Heart right ventricle (tissue), 16 donors: ENCODE measurements at regions of chr1 and their contacts with region 1.

Region 1: DNA sequence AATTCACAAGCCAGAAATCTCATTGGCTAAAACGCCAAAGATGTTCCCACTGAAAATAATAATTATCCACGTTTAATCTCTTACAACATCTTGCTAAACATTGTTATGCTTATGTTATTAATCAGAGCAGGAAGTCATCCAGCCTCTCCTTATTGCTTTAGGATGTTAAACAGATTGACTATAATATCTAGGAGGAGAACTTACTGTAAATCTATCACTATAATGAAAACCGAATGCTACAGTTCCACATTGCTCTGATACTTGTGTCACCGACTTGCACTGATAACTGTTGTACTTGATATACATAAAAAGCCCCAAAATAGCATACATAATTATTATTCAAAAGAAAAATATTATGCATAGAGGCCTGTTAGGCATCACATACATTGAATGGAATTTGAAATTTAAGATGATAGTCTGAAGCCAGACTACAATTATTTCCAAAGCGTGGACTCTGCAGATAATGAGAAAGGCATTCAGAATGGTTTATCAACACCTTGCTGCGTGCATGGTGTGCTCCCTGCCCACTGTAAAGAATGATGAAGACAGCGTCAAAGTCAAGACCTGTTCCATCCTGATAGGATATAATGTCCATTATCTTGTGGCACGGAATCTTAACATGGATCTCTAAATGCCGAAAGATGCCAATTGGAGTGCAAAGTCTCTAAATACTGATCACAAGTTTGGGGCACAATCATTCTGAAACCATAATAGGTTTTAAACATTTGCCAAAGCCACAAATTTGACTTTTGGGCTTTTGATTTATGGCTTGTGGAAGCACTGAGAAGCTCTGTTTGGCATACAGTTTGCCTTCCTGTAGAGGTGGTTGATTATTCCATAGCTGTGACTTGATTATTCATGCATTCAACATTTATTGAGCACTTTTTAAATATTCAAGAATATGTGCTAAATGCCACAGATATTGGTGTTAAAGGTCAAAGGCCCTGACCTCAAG is 71.3 kb downstream of the CRB1 start:
- DNase-seq: no peak
- ATAC-seq: no peak
- H3K4me3 ChIP-seq: no peak overlapping the region
- H3K27ac ChIP-seq: no peak overlapping the region
- H3K4me1 ChIP-seq: no peaks in the 10 kb centered on the region
- H3K27me3 ChIP-seq: no peaks in the 10 kb centered on the region
- CTCF ChIP-seq: no peak

Region 2: DNA sequence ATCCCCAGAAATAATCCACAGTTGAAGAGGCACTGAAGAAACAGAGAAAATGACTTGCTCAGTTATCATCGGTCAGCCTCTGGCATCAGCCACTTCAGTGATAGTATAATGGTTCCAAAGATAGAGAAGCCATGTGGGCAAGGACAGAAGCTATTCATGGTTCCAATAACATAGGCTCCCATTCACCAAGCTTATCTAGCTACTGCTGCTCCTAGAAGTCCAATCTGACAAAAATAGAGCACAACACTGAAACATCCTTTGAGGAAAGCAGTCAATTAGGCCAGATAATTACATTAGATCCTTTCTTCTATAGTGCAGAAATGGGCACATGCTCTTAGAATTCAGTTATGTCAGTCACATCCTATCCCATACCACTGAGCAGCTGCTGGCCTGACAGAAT is 104.8 kb before region 1 on chr1:
- intact Hi-C with region 1: loop called in 1 of 10 experiments (anchors 10 kb)
- DNase-seq: no peak
- ATAC-seq: peak in 3 of 8 donors; percentile 27 to 62 (median 47)
- H3K4me3 ChIP-seq: no peak overlapping the region
- H3K27ac ChIP-seq: no peak overlapping the region
- H3K4me1 ChIP-seq: peaks cover 0 to 3% (median 0%) of the 10 kb centered on the region in 9 donors
- H3K27me3 ChIP-seq: no peaks in the 10 kb centered on the region
- CTCF ChIP-seq: no peak

Region 3: GRCh38 chr1:197399755-197400527 is 60.6 kb after region 1 on chr1:
- intact Hi-C with region 1: no loop called
- DNase-seq: no peak
- ATAC-seq: no peak
- H3K4me3 ChIP-seq: no peak overlapping the region
- H3K27ac ChIP-seq: no peak overlapping the region
- H3K4me1 ChIP-seq: no peaks in the 10 kb centered on the region
- H3K27me3 ChIP-seq: no peaks in the 10 kb centered on the region
- CTCF ChIP-seq: peak in 4 of 9 donors; percentile 4 to 48 (median 16)